Transverse colon (tissue), 4 donors: ENCODE measurements at regions of chr16 and their contacts with region 1.

Region 1: DNA sequence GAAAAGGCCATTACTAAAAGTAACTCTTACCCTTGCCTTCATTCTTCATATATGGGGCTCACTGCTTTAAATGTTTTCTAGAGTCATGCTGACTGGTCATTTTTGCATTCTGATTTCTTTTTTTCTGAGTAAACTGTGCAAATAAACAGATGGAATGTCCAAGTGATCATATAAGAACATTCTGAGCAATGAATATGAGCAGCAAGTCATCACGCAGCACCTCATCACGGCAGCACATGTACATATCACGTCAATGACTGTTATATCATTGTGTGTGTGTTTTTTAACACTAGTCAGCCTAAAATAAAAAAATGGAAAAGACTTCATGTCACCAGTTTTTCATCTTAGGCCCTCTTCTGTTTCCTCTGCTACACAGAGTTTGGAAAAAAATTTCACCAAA is 490.0 kb upstream of the ZFHX3 start:
- DNase-seq: no peak
- H3K4me3 ChIP-seq: no peak overlapping the region
- H3K27ac ChIP-seq: no peak overlapping the region
- H3K4me1 ChIP-seq: no peaks in the 10 kb centered on the region
- H3K27me3 ChIP-seq: peaks cover 3% of the 10 kb centered on the region
- CTCF ChIP-seq: no peak
- EP300 ChIP-seq: no peak
- POLR2A ChIP-seq: no peak

Region 2: GRCh38 chr16:72768591-72768990 is 769.3 kb before region 1 on chr16:
- in situ Hi-C with region 1: no loop called
- intact Hi-C with region 1: loop called (anchors 5 kb)
- DNase-seq: no peak
- H3K4me3 ChIP-seq: no peak overlapping the region
- H3K27ac ChIP-seq: no peak overlapping the region
- H3K4me1 ChIP-seq: no peaks in the 10 kb centered on the region
- H3K27me3 ChIP-seq: no peaks in the 10 kb centered on the region
- CTCF ChIP-seq: no peak
- EP300 ChIP-seq: no peak
- POLR2A ChIP-seq: no peak